Activated CD4-positive, alpha-beta T cell treated with anti-CD3 and anti-CD28 coated beads, Interleukin-2, amount 10 ng/mL, durations not matched to agents 24 days and 14 days (primary cell): ENCODE measurements at regions of chr1 and their contacts with region 1.

Region 1: GRCh38 chr1:243939167-243939848 is 89.3 kb upstream of the AKT3 start:
- DNase-seq: no peak
- H3K4me3 Mint-ChIP-seq: no peak overlapping the region
- H3K27ac Mint-ChIP-seq: no peak overlapping the region
- H3K4me1 Mint-ChIP-seq: peaks cover 12% of the 10 kb centered on the region
- H3K27me3 Mint-ChIP-seq: peaks cover 5% of the 10 kb centered on the region

Region 2: DNA sequence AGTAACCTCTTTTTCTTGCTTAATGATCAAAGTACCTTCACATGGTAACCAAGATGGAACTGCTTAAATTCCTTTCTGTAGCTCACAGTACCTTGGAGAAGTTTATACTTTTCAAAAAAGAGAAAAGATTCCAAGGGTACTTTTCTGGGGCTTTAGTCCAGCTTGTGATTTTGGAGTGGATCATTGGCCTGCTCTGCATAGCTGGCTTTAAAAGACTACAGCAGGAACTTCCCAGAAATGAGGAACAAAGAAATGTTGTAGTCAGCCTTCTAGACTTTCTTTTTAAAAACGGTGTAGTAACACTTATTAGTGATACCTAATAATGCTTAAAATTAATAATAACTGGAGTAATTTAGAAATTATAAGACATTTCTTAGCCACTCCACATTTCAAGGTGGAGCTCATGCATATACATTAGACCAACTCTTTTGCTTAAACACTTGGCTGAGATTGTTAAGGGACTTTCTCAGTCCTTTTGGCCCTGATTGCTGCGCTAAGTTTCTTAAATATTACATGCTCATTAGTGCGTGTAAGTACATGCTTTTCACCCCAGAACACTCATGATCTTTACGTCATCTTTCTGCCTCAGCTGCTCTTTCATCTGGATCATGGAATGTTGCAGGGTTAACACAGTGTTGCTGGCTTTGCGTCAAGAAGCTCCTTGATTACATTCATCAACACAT is 626.2 kb before region 1 on chr1:
- intact Hi-C with region 1: no loop called
- DNase-seq: no peak
- H3K4me3 Mint-ChIP-seq: no peak overlapping the region
- H3K27ac Mint-ChIP-seq: no peak overlapping the region
- H3K4me1 Mint-ChIP-seq: peaks cover 6% of the 10 kb centered on the region
- H3K27me3 Mint-ChIP-seq: no peaks in the 10 kb centered on the region

Region 3: DNA sequence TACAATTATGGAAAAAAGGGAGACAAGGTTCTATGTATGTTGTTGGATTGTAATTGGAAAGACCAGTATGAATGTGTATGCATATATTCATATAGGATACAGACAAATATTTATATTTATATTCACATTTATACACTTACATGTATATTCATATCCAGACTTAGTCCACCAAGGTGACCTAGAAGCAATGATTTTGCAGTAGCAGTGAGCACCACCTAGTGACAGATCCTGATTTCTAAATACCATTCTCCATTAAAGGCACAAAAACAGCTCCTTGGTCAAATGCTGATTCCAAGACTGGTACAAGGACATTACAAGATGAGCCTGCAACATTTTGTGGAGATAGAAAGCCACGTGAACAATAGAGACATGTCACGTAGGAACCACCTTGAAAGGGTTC is 530.0 kb before region 1 on chr1:
- intact Hi-C with region 1: loop called (anchors 10 kb)
- DNase-seq: peak; percentile 54
- H3K4me3 Mint-ChIP-seq: no peak overlapping the region
- H3K27ac Mint-ChIP-seq: no peak overlapping the region
- H3K4me1 Mint-ChIP-seq: peaks cover 21% of the 10 kb centered on the region
- H3K27me3 Mint-ChIP-seq: no peaks in the 10 kb centered on the region

Region 4: GRCh38 chr1:243819438-243819839 is 119.9 kb before region 1 on chr1:
- intact Hi-C with region 1: no loop called
- DNase-seq: no peak
- H3K4me3 Mint-ChIP-seq: no peak overlapping the region
- H3K27ac Mint-ChIP-seq: no peak overlapping the region
- H3K4me1 Mint-ChIP-seq: peaks cover 9% of the 10 kb centered on the region
- H3K27me3 Mint-ChIP-seq: no peaks in the 10 kb centered on the region

Region 5: DNA sequence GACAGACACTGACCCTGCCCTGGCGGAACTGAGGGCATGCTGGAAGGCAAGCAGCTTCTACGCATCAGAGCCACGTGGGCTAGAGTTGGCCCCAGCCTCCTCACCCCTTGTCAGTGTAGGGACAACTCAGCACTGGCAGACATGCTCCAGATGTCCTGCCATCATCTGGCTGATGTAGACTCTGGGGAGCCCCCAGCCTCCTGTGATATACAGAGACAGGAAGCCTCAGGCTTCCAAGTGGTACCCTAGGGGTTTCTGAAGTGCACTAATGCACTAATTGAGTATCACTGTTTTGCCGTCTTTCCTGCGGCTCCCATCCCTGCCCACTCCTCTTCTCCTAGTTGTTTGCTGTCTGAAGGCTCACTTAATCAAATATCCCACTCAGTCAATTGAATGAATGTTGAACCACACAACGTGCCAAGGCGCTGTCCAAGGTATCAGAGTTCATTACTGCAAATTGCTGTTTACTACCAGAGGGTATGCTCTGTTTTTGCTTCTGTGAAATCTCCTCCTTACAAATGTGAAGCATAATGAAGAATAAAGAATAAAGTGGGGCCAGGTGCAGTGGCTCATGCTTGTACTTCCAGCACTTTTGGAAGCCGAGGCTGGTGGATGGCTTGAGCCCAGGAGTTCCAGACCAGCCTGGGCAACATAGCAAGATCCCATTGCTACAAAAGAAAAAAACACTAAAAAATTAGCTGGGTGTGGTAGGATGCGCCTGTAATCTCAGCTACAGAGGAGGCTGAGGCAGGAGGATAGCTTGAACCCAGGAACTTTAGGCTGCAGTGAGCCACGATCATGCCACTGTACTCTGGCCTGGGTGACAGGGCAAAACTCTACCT is 35.4 kb after region 1 on chr1:
- intact Hi-C with region 1: no loop called
- DNase-seq: no peak
- H3K4me3 Mint-ChIP-seq: no peak overlapping the region
- H3K27ac Mint-ChIP-seq: no peak overlapping the region
- H3K4me1 Mint-ChIP-seq: no peaks in the 10 kb centered on the region
- H3K27me3 Mint-ChIP-seq: peaks cover 6% of the 10 kb centered on the region